Uterus (tissue), 4 donors: ENCODE measurements at regions of chr9 and their contacts with region 1.

Region 1: GRCh38 chr9:134419684-134420076 is 93.4 kb downstream of the RXRA start:
- DNase-seq: no peak
- H3K4me3 ChIP-seq: no peak overlapping the region
- H3K27ac ChIP-seq: peak overlapping the region in 1 of 2 donors; percentile 77
- H3K4me1 ChIP-seq: peaks cover 0 to 14% of the 10 kb centered on the region in 2 donors
- H3K27me3 ChIP-seq: no peaks in the 10 kb centered on the region
- CTCF ChIP-seq: no peak
- POLR2A ChIP-seq: no peak

Region 2: GRCh38 chr9:134283111-134283515 is 136.6 kb before region 1 on chr9:
- intact Hi-C with region 1: no loop called
- DNase-seq: peak; percentile 70 to 84
- H3K4me3 ChIP-seq: no peak overlapping the region
- H3K27ac ChIP-seq: no peak overlapping the region
- H3K4me1 ChIP-seq: peaks cover 0 to 10% of the 10 kb centered on the region in 2 donors
- H3K27me3 ChIP-seq: no peaks in the 10 kb centered on the region
- CTCF ChIP-seq: no peak
- POLR2A ChIP-seq: no peak

Region 3: GRCh38 chr9:134339183-134339806 is 80.4 kb before region 1 on chr9:
- intact Hi-C with region 1: loop called (anchors 10 kb)
- DNase-seq: peak in 1 of 2 donors; percentile 45
- H3K4me3 ChIP-seq: peak overlapping the region in 1 of 2 donors; percentile 14
- H3K27ac ChIP-seq: peak overlapping the region in 1 of 2 donors; percentile 43
- H3K4me1 ChIP-seq: peaks cover 8 to 49% of the 10 kb centered on the region in 2 donors
- H3K27me3 ChIP-seq: no peaks in the 10 kb centered on the region
- CTCF ChIP-seq: no peak
- POLR2A ChIP-seq: no peak

Region 4: DNA sequence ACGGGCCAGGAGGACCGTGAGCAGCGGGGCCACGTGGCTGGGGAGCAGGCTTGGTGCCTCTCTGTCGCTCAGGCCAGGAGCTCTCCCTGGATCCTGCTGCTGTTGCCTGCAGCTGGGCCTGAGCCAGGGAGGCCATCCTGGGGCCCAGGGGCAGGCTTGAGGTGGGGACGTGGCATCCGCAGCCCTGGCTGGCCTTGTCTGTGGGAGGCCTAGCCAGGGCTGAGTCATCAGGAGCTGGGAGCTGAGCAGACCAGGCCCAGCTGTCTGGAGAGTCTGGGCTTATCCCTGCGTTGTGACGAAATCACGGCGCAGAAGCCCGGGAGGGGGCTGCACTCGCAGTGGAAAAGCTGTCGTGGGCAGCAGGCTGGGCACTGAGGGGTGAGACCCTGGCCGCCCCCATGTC is 83.1 kb after region 1 on chr9:
- intact Hi-C with region 1: no loop called
- DNase-seq: peak; percentile 79 to 83
- H3K4me3 ChIP-seq: no peak overlapping the region
- H3K27ac ChIP-seq: no peak overlapping the region
- H3K4me1 ChIP-seq: peaks cover 0 to 9% of the 10 kb centered on the region in 2 donors
- H3K27me3 ChIP-seq: peaks cover 0 to 7% of the 10 kb centered on the region in 2 donors
- CTCF ChIP-seq: no peak
- POLR2A ChIP-seq: no peak

Region 5: DNA sequence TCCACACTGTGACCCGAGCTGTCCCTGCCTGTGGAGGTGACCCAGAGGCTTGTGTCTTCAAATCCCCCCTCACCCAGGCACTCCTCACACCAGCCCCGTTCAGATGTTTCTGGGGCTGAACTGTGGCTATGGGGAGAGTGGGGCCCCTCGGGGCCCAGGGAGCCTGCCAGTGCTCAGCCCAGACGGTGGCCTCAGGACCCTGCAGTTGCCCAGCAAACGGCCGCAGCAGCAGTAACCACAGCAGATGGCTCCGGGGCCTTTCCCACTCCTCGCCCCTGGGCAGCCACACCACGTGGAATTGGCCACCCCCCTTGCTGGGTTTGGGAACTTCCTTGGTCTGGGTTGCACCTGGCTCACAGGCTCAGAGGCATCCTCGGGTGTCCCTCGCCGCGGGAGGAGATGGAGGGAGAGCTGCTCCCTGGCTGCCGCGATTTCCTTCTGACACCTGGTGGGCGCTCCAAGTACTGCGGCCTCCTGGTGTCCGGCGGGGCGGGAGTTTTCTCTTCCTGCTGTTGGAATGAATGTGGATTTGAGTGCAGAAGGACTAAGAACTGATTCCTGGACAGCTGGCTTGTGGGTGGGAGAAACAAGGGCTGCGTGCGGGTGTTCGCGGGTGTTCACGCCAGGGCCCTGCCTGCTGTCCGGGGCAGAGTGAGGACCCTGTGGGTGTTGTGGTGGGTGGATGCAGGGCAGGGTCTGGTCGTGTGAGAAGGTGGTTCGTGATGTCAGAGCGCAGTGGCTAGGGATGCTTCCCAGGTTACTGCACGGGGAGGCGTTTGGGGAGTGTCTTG is 319.4 kb after region 1 on chr9:
- intact Hi-C with region 1: no loop called
- DNase-seq: peak; percentile 80 to 81
- H3K4me3 ChIP-seq: no peak overlapping the region
- H3K27ac ChIP-seq: peak overlapping the region in 1 of 2 donors; percentile 41
- H3K4me1 ChIP-seq: peaks cover 0 to under 1% of the 10 kb centered on the region in 2 donors
- H3K27me3 ChIP-seq: no peaks in the 10 kb centered on the region
- CTCF ChIP-seq: peak; percentile 87 to 96 (median 92)
- POLR2A ChIP-seq: peak in 1 of 2 donors; percentile 9

Region 6: GRCh38 chr9:134807716-134808444 is 388.2 kb after region 1 on chr9:
- intact Hi-C with region 1: no loop called
- DNase-seq: no peak
- H3K4me3 ChIP-seq: no peak overlapping the region
- H3K27ac ChIP-seq: peak overlapping the region in 1 of 2 donors; percentile 2
- H3K4me1 ChIP-seq: no peaks in the 10 kb centered on the region
- H3K27me3 ChIP-seq: no peaks in the 10 kb centered on the region
- CTCF ChIP-seq: no peak
- POLR2A ChIP-seq: no peak